Heart left ventricle (tissue), 16 donors: ENCODE measurements at regions of chr5 and their contacts with region 1.

Region 1: GRCh38 chr5:159451197-159452052 is 121.1 kb upstream of the IL12B start:
- DNase-seq: peak in 4 of 5 donors; percentile 62 to 70 (median 67)
- ATAC-seq: peak; percentile 95 to 98 (median 96)
- H3K4me3 ChIP-seq: no peak overlapping the region
- H3K27ac ChIP-seq: peak overlapping the region in 11 of 12 donors; percentile 52 to 95 (median 82)
- H3K4me1 ChIP-seq: peaks cover 0 to 18% (median 11%) of the 10 kb centered on the region in 12 donors
- H3K27me3 ChIP-seq: no peaks in the 10 kb centered on the region
- CTCF ChIP-seq: no peak
- POLR2A ChIP-seq: no peak

Region 2: DNA sequence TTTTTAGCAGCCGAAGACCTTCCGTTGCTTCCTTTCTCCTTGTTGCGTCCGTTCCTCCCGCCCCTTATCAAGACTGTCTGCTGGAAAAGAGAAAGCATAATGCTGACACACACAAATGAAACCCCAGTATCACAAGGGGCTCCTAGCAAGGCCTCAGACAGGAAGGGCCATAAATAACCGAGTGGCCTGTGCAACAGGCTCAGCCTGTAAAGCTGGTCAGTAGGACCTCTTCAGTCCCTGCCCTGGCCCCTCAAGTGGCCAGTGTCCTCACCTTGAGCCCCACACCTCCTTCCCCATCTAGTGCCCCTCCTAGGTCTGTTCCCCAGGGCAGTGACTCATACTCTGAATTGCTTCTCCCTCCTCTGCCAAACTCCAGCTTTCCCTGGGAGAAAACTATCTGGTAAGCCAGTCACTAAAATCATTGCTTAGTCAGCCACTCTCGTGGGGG is 53.5 kb after region 1 on chr5:
- intact Hi-C with region 1: loop called in 9 of 10 experiments (anchors 1 to 5 kb)
- DNase-seq: peak in 4 of 5 donors; percentile 29 to 54 (median 38)
- ATAC-seq: peak; percentile 53 to 92 (median 76)
- H3K4me3 ChIP-seq: no peak overlapping the region
- H3K27ac ChIP-seq: peak overlapping the region in 11 of 12 donors; percentile 47 to 80 (median 73)
- H3K4me1 ChIP-seq: peaks cover 0 to 34% (median 15%) of the 10 kb centered on the region in 12 donors
- H3K27me3 ChIP-seq: no peaks in the 10 kb centered on the region
- CTCF ChIP-seq: no peak
- POLR2A ChIP-seq: no peak

Region 3: DNA sequence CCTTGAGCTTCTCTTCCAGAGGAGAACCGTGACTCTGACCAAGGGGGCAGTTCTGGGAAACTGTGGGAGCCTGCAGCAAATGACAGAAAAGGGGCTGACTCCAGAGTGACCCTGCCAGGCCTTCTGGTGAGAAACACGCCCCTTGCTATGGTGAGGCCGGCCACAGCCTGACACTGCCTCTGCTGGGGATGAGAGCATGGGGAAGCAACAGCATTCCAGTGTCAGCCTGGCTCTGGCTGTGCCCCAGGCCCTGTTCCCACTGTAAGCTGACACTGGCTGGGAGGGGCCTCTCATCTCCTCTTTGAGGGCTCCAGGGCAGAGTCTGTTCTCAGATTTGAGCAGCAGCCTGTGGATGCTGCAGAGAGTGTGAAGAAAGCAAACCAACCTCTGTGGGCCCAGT is 58.9 kb after region 1 on chr5:
- intact Hi-C with region 1: loop called in 9 of 10 experiments (anchors 1 to 5 kb)
- DNase-seq: peak; percentile 79 to 91 (median 86)
- ATAC-seq: peak; percentile 94 to 97 (median 96)
- H3K4me3 ChIP-seq: no peak overlapping the region
- H3K27ac ChIP-seq: peak overlapping the region; percentile 54 to 90 (median 80)
- H3K4me1 ChIP-seq: peaks cover 0 to 33% (median 14%) of the 10 kb centered on the region in 12 donors
- H3K27me3 ChIP-seq: no peaks in the 10 kb centered on the region
- CTCF ChIP-seq: peak in 3 of 12 donors; percentile 23 to 34 (median 24)
- POLR2A ChIP-seq: peak in 1 of 2 donors; percentile 47

Region 4: DNA sequence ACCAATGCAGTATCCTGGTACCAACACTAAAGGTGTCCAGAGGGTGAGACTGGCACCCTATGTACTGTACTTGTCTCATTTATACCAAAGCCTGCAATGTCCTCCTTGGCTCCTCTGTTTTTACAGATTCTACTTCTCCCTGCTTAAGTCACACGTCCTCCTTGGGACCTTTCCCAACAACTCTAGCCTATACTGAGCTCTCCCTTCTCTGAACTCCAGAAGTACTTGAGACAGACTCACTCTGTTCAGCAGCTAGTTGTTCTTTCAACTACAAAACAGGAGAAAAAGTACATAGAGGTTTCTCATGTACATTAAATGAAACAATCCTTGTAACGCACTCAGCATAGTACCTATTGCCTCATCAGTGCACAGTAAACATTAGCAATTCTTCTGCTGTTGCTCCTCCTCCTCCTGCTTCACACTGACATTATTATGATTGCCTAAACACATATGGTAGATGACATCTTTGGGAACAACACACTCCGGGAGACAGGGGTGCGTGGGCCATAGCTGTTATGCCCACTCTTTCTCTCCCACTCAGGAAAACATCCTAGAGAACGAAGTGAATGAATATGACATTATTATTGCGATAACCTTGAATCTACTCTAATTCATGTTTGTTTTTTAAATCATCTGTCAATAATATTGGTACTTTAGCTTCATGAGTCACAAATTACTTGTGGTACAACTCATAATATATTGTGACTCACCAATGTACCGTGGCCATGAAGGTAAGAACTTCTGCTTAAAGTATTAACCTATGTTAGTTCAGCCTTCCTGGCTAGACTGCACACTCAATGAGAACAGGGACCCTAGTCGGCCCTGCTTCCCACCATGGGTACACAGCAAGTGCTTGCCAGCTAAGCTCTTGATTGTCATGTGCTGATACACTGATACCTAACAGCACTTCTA is 284.6 kb after region 1 on chr5:
- intact Hi-C with region 1: no loop called
- DNase-seq: no peak
- ATAC-seq: no peak
- H3K4me3 ChIP-seq: no peak overlapping the region
- H3K27ac ChIP-seq: no peak overlapping the region
- H3K4me1 ChIP-seq: peaks cover 0 to 8% (median 0%) of the 10 kb centered on the region in 12 donors
- H3K27me3 ChIP-seq: no peaks in the 10 kb centered on the region
- CTCF ChIP-seq: no peak
- POLR2A ChIP-seq: no peak